GM12878 (cell line): ENCODE measurements at regions of chr5 and their contacts with region 1.

Region 1: GRCh38 chr5:16934123-16934522 is 2.0 kb downstream of the MYO10 start:
- DNase-seq: no peak
- ATAC-seq: peak; percentile 77
- H3K4me3 ChIP-seq: no peak overlapping the region
- H3K27ac ChIP-seq: no peak overlapping the region
- H3K4me1 ChIP-seq: no peaks in the 10 kb centered on the region
- H3K27me3 ChIP-seq: peaks cover 0 to 29% of the 10 kb centered on the region in 2 experiments; a peak in 2 of 4 replicates
- CTCF ChIP-seq: peak; percentile 58 to 76 (median 69)
- EP300 ChIP-seq: no peak
- POLR2A ChIP-seq: no peak
- RAD21 ChIP-seq: 0 out of 2 replicates have a peak, but pooled peaks have one; percentile 32

Region 2: GRCh38 chr5:16477541-16477940 is 456.6 kb before region 1 on chr5:
- CTCF ChIA-PET with region 1: no interaction called
- POLR2A ChIA-PET with region 1: no interaction called
- RAD21 ChIA-PET with region 1: no interaction called
- SMC1A ChIA-PET with region 1: no interaction called
- in situ Hi-C with region 1: no loop called
- intact Hi-C with region 1: no loop called
- DNase-seq: no peak
- ATAC-seq: no peak
- H3K4me3 ChIP-seq: no peak overlapping the region
- H3K27ac ChIP-seq: no peak overlapping the region
- H3K4me1 ChIP-seq: no peaks in the 10 kb centered on the region
- H3K27me3 ChIP-seq: no peaks in the 10 kb centered on the region
- CTCF ChIP-seq: no peak
- EP300 ChIP-seq: no peak
- POLR2A ChIP-seq: no peak
- RAD21 ChIP-seq: no peak

Region 3: DNA sequence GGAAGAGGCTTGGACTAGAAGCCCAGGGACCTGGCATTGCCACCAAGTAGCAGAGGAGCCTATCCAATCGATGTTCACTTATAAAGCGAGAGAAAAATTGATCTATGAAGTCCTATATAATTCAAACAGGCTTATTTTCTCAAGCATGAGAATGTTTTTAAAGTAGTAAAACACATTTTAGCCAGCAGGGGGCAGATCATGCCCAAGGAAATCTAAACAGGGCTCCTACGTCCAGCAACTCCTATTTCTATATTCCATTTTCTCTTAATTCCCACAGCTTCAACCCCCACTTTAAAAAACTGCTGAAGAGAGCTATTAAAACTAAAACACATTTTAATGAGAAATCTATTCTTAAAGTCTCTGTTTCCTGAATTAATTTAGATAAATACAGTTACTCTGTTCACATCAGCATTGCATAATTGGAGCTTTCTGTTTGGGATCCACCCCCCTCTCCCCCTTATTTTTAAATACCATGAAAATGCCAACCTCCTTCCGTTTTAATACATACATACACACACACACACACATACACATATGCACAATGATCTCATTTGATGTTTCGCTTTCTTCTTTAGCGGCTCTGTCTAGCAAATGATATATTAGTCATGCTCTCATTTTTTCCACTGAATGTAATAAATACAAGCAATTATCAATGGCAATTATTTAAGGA is 143.0 kb before region 1 on chr5:
- CTCF ChIA-PET with region 1: no interaction called
- POLR2A ChIA-PET with region 1: no interaction called
- RAD21 ChIA-PET with region 1: no interaction called
- SMC1A ChIA-PET with region 1: no interaction called
- in situ Hi-C with region 1: no loop called
- intact Hi-C with region 1: loop called (anchors 5 kb)
- DNase-seq: peak; percentile 24
- ATAC-seq: peak; percentile 76
- H3K4me3 ChIP-seq: no peak overlapping the region
- H3K27ac ChIP-seq: no peak overlapping the region
- H3K4me1 ChIP-seq: no peaks in the 10 kb centered on the region; the same call in 1 of the 2 replicates
- H3K27me3 ChIP-seq: no peaks in the 10 kb centered on the region
- CTCF ChIP-seq: peak; percentile 42 to 66 (median 52); a peak in 5 of 6 replicates
- EP300 ChIP-seq: no peak
- POLR2A ChIP-seq: no peak
- RAD21 ChIP-seq: peak; percentile 73